ENCODE measurements at regions of chr17 and their contacts with region 1.

Region 1: DNA sequence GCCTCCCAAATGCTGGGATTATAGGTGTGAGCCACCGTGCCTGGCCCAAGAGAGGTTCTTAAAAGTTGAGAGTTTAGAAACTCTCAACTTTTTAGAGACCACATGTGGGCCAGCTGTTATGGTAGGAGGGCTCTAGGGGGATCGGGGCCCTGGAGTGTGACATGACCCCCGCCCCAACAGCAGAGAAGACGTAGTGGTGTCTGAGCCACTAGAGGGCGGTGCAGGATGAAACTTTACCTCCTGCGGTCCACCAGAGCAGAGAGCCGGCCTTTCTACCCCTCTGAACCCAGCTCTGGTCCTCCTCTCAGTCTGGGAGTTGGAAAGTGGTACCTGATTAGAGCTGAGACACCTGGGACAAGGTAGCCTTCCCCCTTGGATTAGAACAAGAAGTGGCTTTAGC is 7.4 kb downstream of the CDK5RAP3 start:
- DNase-seq: peak; percentile 95
- H3K4me3 ChIP-seq: no peak overlapping the region; a peak in 1 of 4 replicates
- H3K27ac ChIP-seq: peak overlapping the region in 1 of 2 experiments; percentile 98; a peak in 2 of 4 replicates
- H3K4me1 ChIP-seq: peaks cover 0 to 49% of the 10 kb centered on the region in 2 experiments; a peak in 2 of 4 replicates
- H3K27me3 ChIP-seq: no peaks in the 10 kb centered on the region
- CTCF ChIP-seq: peak; percentile 99
- EP300 ChIP-seq: no peak
- RAD21 ChIP-seq: peak; percentile 99

Region 2: GRCh38 chr17:47901423-47901822 is 76.9 kb before region 1 on chr17:
- CTCF ChIA-PET with region 1: no interaction called
- POLR2A ChIA-PET with region 1: no interaction called
- DNase-seq: no peak
- H3K4me3 ChIP-seq: no peak overlapping the region
- H3K27ac ChIP-seq: no peak overlapping the region
- H3K4me1 ChIP-seq: peaks cover 8 to 15% of the 10 kb centered on the region in 2 experiments; a peak in 3 of 4 replicates
- H3K27me3 ChIP-seq: no peaks in the 10 kb centered on the region
- CTCF ChIP-seq: no peak
- EP300 ChIP-seq: no peak
- RAD21 ChIP-seq: no peak

Region 3: DNA sequence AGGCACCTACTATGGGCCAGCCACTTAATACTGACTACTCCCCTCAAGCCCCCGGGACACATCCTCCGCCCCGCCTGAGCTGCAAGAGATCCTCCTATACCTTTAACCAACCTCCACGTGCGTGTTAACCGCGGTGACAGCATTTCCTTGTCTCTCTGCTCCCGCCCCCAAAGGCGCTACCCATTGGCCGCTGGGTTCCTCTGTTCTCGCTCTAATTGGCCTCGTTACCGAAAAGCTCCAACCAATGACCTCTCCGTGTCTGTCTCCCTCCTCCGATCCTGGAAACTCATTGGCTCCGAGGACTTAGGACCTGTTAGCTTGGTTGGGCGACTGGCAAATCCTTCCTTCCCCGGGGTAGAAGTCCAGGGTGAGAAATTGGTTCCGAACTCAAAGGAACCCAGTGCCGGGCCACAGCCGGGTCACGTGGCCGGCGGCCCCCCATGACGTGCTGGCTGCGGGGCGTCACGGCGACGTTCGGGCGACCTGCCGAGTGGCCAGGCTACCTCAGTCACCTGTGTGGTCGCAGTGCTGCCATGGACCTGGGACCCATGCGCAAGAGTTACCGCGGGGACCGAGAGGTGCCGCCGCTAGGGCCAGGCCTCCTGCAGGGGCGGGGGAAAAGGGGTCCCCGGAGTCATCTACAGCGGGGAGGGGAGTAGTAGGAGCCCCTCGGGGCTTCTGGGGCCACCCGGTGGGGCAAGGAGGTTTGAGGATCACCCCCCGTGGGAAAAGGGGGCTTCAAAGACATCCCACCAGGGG is 36.9 kb before region 1 on chr17 and contains the start of gene PNPO:
- CTCF ChIA-PET with region 1: interaction called, 1,216 read pairs
- POLR2A ChIA-PET with region 1: interaction called, 4 read pairs
- DNase-seq: peak; percentile 98
- H3K4me3 ChIP-seq: peak within 1 kb of the TSS; percentile 76 to 78
- H3K27ac ChIP-seq: peak within 1 kb of the TSS in 1 of 2 experiments; percentile 73; a peak in 3 of 4 replicates
- H3K4me1 ChIP-seq: peaks cover 6 to 17% of the 10 kb centered on the region in 2 experiments; a peak in 3 of 4 replicates
- H3K27me3 ChIP-seq: no peaks in the 10 kb centered on the region
- CTCF ChIP-seq: no peak; the same call in 1 of the 2 replicates
- EP300 ChIP-seq: peak in 1 of 2 experiments; percentile 54; a peak in 1 of 4 replicates
- RAD21 ChIP-seq: no peak
- polyA plus RNA-seq, gene PNPO: 26.1 and 33.8 TPM in 2 replicates

Region 4: GRCh38 chr17:47957591-47958428 is 20.5 kb before region 1 on chr17 and contains the start of gene PRR15L:
- CTCF ChIA-PET with region 1: interaction called, 1,216 read pairs
- POLR2A ChIA-PET with region 1: no interaction called
- DNase-seq: no peak
- H3K4me3 ChIP-seq: no peak within 1 kb of the TSS
- H3K27ac ChIP-seq: no peak within 1 kb of the TSS
- H3K4me1 ChIP-seq: peaks cover 0 to 10% of the 10 kb centered on the region in 2 experiments; a peak in 3 of 4 replicates
- H3K27me3 ChIP-seq: no peaks in the 10 kb centered on the region
- CTCF ChIP-seq: no peak
- EP300 ChIP-seq: no peak
- RAD21 ChIP-seq: no peak
- polyA plus RNA-seq, gene PRR15L: not detected in 2 replicates

Region 5: DNA sequence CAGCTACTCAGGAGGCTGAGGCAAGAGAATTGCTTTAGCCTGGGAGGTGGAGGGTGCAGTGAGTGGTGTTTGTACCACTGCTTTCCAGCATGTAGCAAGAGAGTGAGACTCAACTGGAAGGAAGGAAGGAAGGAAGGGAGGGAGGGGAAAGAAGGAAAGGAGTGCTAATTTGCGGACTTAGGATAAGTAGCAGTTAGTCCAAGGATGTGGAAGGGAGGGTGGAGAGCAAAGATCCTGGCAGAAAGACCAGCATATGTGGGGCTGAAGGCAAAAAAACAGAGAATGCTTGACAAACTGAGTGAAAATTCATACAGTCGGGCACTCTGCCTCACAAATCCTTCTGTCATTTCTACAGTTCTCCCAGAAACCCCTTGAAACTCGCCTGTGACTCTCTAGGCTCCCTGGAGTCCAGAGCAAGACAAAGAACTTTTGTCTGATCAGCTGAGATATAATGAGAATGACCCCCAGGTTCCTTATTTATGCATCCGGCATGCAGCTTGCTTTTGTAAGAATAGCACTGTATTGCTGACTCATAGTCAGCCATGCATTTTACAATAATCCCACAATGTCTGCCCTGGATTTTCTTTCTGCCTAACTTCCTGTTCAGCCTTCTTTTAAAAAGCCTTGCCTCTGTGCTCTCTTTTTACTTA is 24.1 kb after region 1 on chr17:
- CTCF ChIA-PET with region 1: interaction called, 479 read pairs
- POLR2A ChIA-PET with region 1: interaction called, 77 read pairs
- DNase-seq: no peak
- H3K4me3 ChIP-seq: peak overlapping the region in 1 of 2 experiments; percentile 43; a peak in 2 of 4 replicates
- H3K27ac ChIP-seq: peak overlapping the region; percentile 99 to 100
- H3K4me1 ChIP-seq: peaks cover 61 to 65% of the 10 kb centered on the region in 2 experiments
- H3K27me3 ChIP-seq: no peaks in the 10 kb centered on the region
- CTCF ChIP-seq: no peak
- EP300 ChIP-seq: no peak
- RAD21 ChIP-seq: no peak

Region 6: DNA sequence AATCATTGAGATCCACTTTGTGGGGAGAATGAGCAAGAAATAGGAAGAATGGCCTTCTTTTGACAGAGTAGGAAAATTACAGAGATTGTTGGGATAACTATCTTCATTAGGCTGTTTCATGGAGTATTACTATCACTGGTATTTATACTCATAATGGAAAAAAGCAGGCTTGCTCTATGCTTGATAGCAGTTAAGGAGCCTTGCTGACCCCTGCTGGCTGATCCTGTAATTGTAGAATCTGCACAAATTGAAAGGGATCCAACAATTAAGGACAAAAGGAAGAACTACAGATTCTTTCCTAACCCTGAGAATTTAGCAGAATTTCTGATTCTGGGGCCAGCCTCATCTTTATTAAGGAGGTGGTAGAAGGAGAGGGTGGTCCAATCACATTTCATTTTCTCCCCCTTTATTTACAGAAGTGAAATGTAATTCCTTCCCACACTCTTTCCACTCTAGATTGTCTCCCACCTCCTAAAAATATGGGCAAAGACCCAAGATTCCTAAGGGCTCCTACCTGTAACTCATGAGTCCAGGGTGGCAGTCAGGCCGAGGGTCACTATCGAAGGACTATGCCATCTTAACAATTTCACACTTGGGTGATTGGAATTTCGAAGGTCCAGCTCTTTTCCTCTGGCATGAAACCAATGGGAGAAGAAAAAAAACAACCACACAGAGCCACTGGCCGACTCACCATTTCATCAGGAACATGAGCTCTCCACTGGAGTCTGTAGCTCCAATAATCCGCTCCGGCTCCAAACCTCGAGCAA is 96.2 kb after region 1 on chr17:
- CTCF ChIA-PET with region 1: interaction called, 10 read pairs
- POLR2A ChIA-PET with region 1: no interaction called
- DNase-seq: peak; percentile 77
- H3K4me3 ChIP-seq: no peak overlapping the region
- H3K27ac ChIP-seq: peak overlapping the region in 1 of 2 experiments; percentile 33; a peak in 1 of 4 replicates
- H3K4me1 ChIP-seq: no peaks in the 10 kb centered on the region
- H3K27me3 ChIP-seq: no peaks in the 10 kb centered on the region
- CTCF ChIP-seq: peak; percentile 98
- EP300 ChIP-seq: no peak
- RAD21 ChIP-seq: peak; percentile 96